Tibial artery (tissue), 4 donors: ENCODE measurements at regions of chr16 and their contacts with region 1.

Region 1: DNA sequence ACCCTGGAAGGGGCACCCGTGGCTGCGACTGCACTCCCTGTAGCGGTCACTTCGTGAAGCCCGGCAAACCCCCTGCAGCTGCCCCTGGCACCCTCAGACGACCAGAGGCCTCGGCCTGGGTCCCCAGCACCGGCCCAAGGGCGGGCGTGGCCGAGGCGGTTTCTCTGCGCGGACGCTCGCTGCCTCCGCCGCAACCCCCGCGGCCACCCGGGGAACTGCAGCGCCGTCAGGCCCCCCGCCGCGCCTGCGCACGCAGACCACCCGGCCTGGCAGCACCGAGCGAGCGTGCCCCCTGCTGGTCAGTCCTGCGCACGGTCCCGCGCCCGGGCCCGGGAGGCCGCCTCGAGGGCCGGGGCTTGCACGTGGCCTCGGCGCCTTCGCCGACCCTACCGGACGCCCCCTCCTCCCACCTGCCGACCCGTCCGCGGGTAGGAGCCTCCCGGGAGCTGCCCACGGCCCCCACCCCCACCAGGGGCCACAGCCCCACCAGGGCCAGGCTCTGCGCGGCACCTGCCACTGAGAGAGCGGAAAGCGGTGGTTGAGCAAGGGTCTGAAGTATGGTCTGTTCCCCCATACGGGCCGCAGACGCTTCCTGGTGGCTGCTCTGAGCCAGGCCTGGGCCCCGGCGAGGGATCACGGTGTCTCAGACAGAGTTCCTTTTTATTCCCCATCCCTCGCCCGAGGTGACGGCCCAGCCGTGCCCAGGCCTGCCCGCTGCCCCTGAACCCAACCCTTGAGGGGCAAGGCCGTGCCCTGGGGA is 11.5 kb upstream of the HS3ST6 start:
- DNase-seq: peak; percentile 77 to 91
- H3K4me3 ChIP-seq: peak overlapping the region; percentile 53 to 67
- H3K27ac ChIP-seq: peak overlapping the region; percentile 46 to 68
- H3K4me1 ChIP-seq: peaks cover 0 to 11% (median 10%) of the 10 kb centered on the region in 4 donors
- H3K27me3 ChIP-seq: peaks cover 0 to 20% of the 10 kb centered on the region in 2 donors
- CTCF ChIP-seq: peak; percentile 98 to 100

Region 2: DNA sequence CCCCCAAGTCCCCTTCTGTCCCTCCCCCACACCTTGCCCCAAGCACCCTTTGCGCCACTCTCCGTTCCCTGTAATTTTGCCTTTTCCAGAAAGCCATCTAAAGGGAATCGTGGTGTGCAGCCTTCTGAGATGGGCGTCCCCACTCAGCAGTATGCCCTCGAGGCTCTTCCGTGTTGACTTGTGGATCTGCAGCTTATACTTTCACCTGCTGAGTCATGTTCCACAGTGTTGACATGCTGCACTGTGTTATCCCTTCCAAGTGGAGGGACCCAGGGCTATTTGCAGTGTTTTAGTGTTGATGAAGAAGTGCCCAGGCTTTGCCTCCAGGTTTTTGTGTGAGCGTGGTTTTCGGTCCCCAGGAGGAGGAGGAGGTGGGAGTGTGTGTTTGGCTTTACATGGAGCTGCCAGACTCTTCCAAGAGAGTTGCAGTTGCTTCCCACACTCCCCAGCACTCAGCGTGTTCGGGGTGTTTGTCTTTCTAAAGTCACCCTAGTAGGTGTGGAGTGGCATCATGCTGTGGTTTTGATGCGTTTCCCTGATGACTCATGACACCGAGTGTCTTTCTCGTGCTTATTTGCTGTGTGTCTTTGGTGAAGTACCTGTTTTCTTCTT is 283.7 kb before region 1 on chr16:
- intact Hi-C with region 1: no loop called
- DNase-seq: no peak
- H3K4me3 ChIP-seq: no peak overlapping the region
- H3K27ac ChIP-seq: no peak overlapping the region
- H3K4me1 ChIP-seq: no peaks in the 10 kb centered on the region
- H3K27me3 ChIP-seq: no peaks in the 10 kb centered on the region
- CTCF ChIP-seq: no peak

Region 3: DNA sequence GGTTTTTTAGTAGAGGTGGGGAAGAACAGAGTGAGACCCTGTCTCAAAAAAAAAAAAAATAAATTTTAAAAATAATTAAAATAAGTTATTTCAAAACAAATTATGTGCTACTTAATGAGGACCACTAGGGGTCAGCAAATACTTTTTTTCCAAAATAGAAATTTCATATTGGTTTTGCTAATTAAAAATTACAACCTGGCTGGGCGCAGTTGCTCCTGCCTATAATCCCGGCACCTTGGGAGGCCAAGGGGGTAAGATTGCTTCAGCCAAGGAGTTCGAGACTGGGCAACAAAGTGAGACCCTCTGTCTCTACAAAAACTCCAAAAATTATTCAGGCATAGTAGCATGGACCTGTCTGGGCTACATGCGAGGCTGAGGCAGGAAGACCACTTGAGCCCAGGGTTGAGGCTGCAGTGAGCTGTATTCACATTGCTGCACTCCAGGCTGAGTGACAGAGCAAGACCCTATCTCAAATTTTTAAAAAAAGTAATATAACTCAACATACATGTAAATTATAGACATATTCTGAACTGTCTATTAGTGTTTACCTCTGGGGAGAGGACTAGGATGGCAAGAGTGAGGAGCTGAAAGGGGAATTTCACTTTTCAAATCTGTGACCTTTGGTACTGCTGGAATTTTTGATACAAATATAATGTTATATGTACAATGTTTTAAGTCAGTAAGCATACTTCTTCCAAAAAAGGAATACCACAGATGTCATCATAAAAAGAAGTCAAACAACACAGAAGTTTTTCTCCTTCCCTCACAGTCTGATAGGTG is 65.9 kb before region 1 on chr16:
- intact Hi-C with region 1: loop called (anchors 5 kb)
- DNase-seq: no peak
- H3K4me3 ChIP-seq: no peak overlapping the region
- H3K27ac ChIP-seq: no peak overlapping the region
- H3K4me1 ChIP-seq: no peaks in the 10 kb centered on the region
- H3K27me3 ChIP-seq: peaks cover 0 to 36% of the 10 kb centered on the region in 2 donors
- CTCF ChIP-seq: peak in 1 of 2 experiments; percentile 56